ENCODE measurements at regions of chr12 and their contacts with region 1.

Region 1: GRCh38 chr12:94769047-94769420 is 118.7 kb upstream of the TMCC3 start:
- DNase-seq: no peak
- H3K4me3 ChIP-seq: no peak overlapping the region
- H3K27ac ChIP-seq: no peak overlapping the region
- H3K4me1 ChIP-seq: peaks cover 0 to 16% (median 9%) of the 10 kb centered on the region in 4 donors
- H3K27me3 ChIP-seq: no peaks in the 10 kb centered on the region
- CTCF ChIP-seq: no peak

Region 2: DNA sequence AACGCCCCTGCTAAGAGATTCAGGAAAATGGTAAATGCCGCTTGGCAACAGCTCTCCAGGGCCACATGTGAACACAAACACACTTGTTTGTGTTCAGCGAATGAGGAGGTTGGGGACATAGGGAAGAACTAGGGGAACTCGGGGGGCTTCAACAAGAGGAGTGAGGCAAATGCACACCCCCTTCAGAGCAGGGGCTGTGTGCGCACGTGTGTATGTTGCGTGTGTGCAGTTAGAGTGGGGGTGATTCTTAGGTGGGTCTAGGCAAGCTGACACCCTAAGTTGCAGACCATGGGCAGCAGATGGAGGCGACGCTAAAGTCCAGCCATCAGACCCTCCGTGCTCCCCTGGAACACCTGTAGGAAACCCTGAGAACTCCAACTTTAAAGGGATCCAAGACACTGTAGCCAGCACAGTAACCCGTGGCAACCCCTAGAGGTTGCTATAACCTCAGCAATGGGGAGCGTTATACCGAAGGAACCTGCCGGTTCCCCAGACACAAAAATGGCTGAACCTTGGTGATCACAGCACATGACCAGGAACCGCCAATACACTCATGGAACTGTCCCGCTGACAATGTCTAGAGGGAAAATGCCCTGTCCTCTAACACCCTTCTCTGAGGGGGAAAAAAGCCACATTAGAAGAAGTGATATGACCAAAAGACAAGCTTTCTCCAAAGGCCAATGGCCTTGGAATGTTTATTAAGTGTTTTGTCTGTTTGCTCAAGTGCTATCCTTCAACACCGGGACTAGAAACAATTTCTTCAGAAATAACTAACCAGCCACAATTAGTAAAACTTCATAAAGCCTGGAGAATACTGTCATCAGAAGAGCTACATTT is 222.9 kb before region 1 on chr12:
- intact Hi-C with region 1: loop called (anchors 5 kb)
- DNase-seq: no peak
- H3K4me3 ChIP-seq: no peak overlapping the region
- H3K27ac ChIP-seq: no peak overlapping the region
- H3K4me1 ChIP-seq: no peaks in the 10 kb centered on the region
- H3K27me3 ChIP-seq: no peaks in the 10 kb centered on the region
- CTCF ChIP-seq: peak; percentile 63 to 71

Region 3: DNA sequence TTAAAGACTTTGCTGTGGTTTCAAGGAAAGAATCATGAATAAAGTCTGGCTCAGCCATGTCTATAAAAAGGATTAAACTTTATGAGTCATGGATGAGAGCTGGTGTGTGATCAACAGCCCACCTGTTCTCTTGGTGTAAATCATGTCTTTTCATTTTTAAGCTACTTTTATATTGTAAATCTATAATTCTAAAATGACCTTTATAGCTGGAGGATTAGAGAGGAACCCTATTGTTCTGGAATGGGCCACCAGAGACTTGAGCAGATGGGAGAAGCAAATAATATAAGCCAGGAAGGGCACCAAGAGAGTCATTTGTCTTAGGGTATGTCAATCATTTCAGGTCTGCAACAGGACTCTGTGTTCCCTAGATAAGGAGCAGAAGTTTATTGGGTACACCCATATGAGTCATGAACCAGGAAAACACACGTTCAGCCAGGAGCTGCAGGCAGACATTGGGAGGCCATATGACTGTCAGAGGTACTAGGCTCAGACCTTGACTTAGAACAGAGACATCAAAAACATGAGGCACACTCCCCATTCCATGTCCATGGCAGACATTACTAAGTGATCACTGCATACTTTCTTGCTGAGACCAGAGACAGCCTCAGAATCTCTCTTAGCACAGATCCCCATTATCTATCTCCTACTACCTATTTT is 185.1 kb after region 1 on chr12:
- intact Hi-C with region 1: no loop called
- DNase-seq: no peak
- H3K4me3 ChIP-seq: no peak overlapping the region
- H3K27ac ChIP-seq: no peak overlapping the region
- H3K4me1 ChIP-seq: no peaks in the 10 kb centered on the region
- H3K27me3 ChIP-seq: no peaks in the 10 kb centered on the region
- CTCF ChIP-seq: no peak

Region 4: GRCh38 chr12:96061864-96062453 is 1292.9 kb after region 1 on chr12:
- intact Hi-C with region 1: no loop called
- DNase-seq: peak; percentile 77 to 82
- H3K4me3 ChIP-seq: no peak overlapping the region
- H3K27ac ChIP-seq: no peak overlapping the region
- H3K4me1 ChIP-seq: no peaks in the 10 kb centered on the region
- H3K27me3 ChIP-seq: no peaks in the 10 kb centered on the region
- CTCF ChIP-seq: peak; percentile 82 to 84

Measured in tibial artery (tissue), 4 donors.